Endothelial cell of umbilical vein (primary cell): ENCODE measurements at regions of chr9 and their contacts with region 1.

Region 1: GRCh38 chr9:35859310-35859989 is 10.8 kb downstream of the OR13J1 start:
- DNase-seq: no peak
- H3K4me3 ChIP-seq: no peak overlapping the region
- H3K27ac ChIP-seq: no peak overlapping the region
- H3K4me1 ChIP-seq: no peaks in the 10 kb centered on the region
- H3K27me3 ChIP-seq: peaks cover 22 to 51% of the 10 kb centered on the region in 2 experiments
- CTCF ChIP-seq: no peak
- POLR2A ChIP-seq: no peak

Region 2: DNA sequence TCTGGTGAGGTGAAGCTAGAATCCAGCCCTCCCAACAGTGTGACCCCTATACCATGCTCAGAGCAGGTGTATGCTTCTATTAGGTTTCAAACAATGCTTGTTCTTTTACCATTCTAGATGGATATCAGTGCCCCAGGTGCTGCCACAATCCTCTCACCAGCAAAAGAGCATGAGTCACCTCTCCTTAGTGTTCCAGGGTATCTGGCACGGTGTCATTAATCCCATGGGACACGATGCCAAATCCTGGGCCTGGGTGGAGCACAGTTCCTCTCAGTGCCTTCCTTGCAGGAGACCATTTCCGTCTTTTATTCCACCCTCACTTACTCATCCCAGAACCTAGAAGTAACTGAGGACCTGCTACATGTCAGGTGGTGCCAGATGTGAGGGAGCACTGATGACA is 12.0 kb after region 1 on chr9:
- CTCF ChIA-PET with region 1: interaction called, 13 read pairs
- POLR2A ChIA-PET with region 1: no interaction called
- dilution Hi-C with region 1: no loop called
- intact Hi-C with region 1: no loop called
- DNase-seq: no peak
- H3K4me3 ChIP-seq: no peak overlapping the region
- H3K27ac ChIP-seq: no peak overlapping the region
- H3K4me1 ChIP-seq: no peaks in the 10 kb centered on the region
- H3K27me3 ChIP-seq: peaks cover 2 to 14% of the 10 kb centered on the region in 2 experiments
- CTCF ChIP-seq: no peak
- POLR2A ChIP-seq: no peak